ENCODE measurements at regions of chr5 and their contacts with region 1.

Region 1: GRCh38 chr5:79020861-79021561 is 35.9 kb upstream of the ARSB start:
- DNase-seq: peak; percentile 27 to 59
- ATAC-seq: peak; percentile 72 to 91 (median 79)
- H3K4me3 ChIP-seq: peak overlapping the region; percentile 3
- H3K27ac ChIP-seq: no peak overlapping the region
- H3K4me1 ChIP-seq: peaks cover 4% of the 10 kb centered on the region
- H3K27me3 ChIP-seq: no peaks in the 10 kb centered on the region
- CTCF ChIP-seq: peak; percentile 82

Region 2: DNA sequence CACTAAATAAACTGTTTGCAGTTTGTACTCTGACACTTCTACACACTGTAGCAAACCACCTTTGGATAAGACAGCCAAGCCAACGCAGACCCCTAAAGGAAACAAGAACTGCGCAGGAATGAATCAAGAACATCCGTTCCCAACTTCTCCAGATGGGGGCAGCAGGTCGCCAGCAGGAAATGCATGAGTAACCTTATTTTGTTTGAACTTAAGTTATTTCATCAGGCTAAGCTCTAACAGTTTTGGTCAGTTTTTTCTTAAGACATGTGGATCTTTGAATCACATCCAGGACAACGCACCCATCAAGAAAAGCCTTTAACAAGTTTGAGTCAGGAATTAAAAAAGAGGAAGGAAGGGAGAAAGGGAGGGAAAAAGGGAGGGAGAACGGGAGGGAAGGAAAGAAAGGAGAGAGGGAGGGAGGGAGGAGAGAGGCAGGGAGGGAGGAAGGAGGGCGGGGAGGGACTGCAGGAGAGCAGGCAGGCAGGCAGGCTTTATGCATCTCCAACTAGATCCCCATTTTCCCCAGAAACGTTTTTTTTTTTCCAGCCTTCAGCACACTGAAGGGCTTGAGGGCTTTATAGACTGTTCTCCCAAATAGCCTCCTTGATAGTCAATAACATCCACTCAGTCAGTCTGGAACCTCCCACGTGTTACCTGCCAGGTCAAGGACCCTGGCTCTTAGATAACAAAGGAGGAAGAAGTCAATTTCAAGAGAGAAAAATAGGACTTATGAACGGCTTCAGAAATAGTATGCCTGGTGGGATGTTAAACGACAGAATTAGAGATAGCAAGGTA is 112.8 kb after region 1 on chr5:
- intact Hi-C with region 1: loop called (anchors 1 to 2 kb)
- DNase-seq: peak; percentile 49 to 70
- ATAC-seq: peak; percentile 34 to 91 (median 74)
- H3K4me3 ChIP-seq: peak overlapping the region; percentile 57
- H3K27ac ChIP-seq: peak overlapping the region; percentile 44
- H3K4me1 ChIP-seq: peaks cover 2% of the 10 kb centered on the region
- H3K27me3 ChIP-seq: no peaks in the 10 kb centered on the region
- CTCF ChIP-seq: peak; percentile 67

Region 3: DNA sequence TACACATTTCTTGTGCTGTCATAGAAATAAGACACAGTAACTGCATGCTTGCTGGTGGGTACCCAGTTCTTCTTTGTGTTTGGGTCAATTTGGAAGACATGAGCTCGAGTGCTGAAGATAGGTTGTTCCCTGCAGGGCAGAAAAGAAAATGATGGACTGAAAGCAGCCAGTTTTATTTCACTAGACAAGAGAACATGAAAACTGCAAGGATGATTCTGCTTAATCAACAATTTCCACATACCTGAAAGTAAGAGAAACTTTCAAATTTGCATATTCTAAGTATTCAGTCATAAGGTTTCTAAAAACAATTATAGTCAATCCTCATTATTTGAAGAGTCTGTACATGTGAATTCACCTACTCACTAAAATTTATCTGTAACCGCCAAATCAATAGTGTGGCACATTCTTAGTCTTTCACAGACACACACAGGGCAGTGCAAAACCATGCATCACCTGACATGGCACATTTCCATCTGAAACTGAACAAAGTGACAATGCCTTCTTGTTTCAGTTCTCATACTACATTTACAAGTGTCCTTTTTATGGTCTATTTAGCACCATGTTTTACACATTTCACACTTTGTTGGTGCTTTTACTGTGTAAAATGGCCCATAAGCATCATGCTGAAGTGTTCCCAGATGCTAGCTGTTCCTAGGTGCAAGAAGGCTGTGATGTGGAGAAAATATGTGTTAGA is 436.0 kb after region 1 on chr5:
- intact Hi-C with region 1: loop called in 1 of 2 experiments (anchors 5 kb)
- DNase-seq: no peak
- ATAC-seq: no peak
- H3K4me3 ChIP-seq: no peak overlapping the region
- H3K27ac ChIP-seq: no peak overlapping the region
- H3K4me1 ChIP-seq: no peaks in the 10 kb centered on the region
- H3K27me3 ChIP-seq: no peaks in the 10 kb centered on the region
- CTCF ChIP-seq: no peak

Region 4: DNA sequence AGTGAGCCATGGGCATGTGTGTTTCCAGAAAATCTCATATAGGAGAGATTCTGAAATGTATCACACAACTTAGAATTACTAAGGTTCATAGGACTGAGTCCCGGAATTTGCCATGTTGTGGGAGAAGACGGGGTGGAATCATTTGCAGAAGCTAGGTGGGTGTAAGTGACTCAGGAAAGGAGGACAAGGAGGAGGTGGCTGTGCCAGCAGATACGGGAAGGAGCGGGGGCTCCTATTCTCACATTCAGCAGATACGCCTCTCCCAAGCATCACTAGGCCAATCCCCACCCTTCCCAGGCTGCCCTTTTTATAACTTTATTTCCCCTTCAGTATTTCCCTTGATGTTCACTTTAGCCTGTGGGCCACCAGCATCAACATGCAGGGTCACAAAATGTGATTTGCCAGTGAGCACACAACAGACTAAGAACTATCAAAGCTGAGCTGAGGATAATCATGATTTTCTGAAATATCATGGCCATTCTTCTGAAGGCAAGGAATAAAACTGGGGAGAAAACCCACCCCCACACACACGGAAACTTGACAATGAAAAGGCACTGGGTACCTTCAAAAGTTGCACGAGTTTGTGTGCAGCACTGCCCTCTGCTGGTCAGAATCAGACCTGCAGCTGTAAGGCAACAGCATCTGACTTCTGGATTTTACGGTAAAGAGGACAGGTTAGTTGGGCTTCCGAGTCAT is 836.9 kb after region 1 on chr5:
- intact Hi-C with region 1: loop called in 1 of 2 experiments (anchors 10 kb)
- DNase-seq: peak; percentile 71 to 85
- ATAC-seq: peak; percentile 74 to 83 (median 78)
- H3K4me3 ChIP-seq: no peak overlapping the region
- H3K27ac ChIP-seq: no peak overlapping the region
- H3K4me1 ChIP-seq: no peaks in the 10 kb centered on the region
- H3K27me3 ChIP-seq: no peaks in the 10 kb centered on the region
- CTCF ChIP-seq: peak; percentile 98

Region 5: DNA sequence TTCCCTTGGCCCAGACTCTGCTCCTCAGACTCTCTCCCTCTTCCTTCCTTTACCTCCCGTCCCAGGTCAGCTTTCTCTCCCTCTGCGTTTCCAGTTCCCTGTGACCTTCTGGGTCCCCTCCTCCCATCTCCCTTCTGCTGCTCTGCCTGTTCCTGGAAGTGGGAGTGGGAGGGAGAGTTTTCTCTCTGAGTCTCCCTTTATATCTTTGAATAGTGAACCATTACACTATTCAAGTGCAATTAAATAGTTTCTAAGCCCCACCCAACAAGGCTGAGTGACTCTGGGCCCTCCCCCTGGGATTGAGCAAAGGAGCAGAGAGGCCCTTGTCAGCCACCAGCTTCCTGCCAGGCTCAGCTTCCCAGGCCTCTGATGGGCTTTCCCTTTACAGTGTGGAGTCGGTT is 1048.9 kb after region 1 on chr5:
- intact Hi-C with region 1: loop called in 1 of 2 experiments (anchors 10 kb)
- DNase-seq: no peak
- ATAC-seq: no peak
- H3K4me3 ChIP-seq: no peak overlapping the region
- H3K27ac ChIP-seq: no peak overlapping the region
- H3K4me1 ChIP-seq: no peaks in the 10 kb centered on the region
- H3K27me3 ChIP-seq: no peaks in the 10 kb centered on the region
- CTCF ChIP-seq: no peak

Region 6: DNA sequence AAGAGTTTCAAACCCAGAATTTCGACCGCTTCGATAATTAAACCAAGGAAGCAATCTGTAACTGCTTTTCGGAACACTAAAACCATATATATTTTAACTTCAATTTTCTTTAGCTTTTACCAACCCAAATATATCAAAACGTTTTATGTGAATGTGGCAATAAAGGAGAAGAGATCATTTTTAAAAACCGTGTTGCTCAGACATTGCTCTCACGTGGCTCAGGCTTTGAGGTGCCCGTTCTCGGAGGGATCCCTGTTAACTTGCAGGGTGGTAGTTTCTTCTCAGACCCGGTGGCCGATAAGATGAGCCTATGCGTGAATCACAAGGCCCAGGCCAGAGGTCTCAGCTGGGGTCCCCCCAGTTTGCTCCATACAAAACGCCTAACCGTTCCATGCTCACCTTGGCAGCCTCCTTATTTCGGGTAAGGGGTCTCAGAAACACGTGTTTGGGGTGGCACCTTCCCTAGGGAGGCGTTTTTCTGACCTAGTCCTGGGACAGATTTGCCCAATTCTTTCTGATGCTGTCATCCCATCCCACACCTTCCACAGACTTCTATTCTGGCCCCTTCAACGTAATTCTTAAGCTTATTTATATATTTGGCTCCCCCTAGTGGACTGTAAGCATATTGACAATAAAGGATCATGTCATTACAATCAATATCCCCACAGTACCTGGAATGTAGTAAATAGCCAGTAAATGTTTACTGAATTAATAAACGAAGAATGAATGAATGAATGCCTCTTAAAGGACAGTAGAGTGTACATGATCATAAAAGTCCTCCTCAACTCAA is 1062.3 kb after region 1 on chr5:
- intact Hi-C with region 1: loop called (anchors 10 kb)
- DNase-seq: no peak
- ATAC-seq: peak; percentile 79 to 91 (median 86)
- H3K4me3 ChIP-seq: peak overlapping the region; percentile 58
- H3K27ac ChIP-seq: peak overlapping the region; percentile 68
- H3K4me1 ChIP-seq: peaks cover 7% of the 10 kb centered on the region
- H3K27me3 ChIP-seq: no peaks in the 10 kb centered on the region
- CTCF ChIP-seq: peak; percentile 73

Measured in psoas muscle (tissue), 8 donors.